Right ventricle myocardium inferior (tissue), 1 donor: ENCODE measurements at regions of chr4 and their contacts with region 1.

Region 1: DNA sequence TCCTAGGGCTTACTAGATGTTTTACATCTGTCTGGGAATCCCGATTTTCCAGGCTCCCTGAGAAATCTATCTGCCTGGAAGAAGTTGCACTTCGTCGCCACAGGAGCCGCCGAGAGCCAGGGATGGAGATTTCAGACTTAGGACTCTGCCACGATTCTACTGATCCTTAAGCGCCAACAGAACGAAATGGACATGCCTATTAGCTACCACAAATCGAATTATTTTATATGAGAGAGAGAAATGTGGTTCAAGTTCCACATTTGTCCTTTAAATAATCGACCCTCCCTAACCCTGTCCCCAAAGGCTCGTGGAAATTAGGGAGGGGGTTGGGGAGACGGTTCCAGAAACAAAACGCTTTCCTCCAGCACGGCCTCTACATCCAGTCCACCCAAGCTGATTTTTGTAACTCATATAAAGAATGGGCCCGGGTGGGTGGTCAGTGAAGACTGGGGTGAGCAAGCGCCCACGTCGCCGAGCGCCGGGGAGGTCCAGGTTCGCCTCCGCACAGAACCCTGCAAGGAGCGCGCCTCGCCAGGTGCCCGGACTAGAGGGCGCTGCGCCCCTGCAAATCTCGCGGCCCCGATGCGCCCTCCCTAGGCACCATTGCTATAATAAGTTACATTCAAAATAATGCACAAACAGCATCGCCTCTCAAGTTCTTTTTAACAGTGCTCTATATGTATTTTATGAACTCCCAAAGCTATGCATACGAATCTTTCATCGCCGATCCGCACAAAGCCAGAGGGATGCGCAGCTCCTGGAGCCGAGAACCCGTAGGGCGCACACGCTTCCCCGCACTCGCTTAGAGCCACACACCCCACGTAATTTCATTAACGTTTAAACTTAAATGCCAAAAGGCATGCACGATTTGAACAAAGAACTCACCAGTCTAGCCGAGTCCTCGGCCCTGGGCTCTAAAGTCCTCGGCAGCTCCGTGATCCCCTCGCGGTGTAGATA is 2.1 kb upstream of the FAT1 start:
- DNase-seq: peak; percentile 82
- ATAC-seq: peak; percentile 83

Region 2: DNA sequence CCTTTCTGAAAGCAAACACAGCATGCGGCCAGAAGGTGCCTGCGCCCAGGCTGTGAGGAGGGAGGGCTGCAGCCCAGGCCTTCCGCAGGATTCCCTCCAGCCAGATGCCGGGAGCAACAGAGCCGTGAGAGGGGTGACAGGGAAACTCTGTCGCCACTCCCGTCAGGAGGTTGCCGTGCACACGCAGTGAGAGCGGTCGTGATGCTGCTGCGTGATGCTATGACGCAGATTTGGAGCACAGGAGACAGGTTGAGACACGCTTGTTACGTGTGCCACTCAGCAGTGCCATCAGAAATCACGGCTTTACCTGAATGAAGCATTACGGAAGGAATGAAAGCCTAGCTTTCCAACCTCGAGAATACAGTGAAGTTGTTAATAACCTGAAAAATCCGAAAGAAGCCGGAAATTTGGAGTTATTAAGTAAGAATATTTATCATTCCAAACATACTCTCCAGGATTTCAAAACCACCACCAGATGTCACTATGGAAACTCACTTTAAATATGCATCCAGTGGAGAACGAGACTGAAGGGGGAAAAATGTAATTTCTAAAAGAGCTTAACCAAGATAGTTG is 56.5 kb before region 1 on chr4:
- intact Hi-C with region 1: loop called (anchors 1 kb)
- DNase-seq: no peak
- ATAC-seq: peak; percentile 61